ENCODE measurements at regions of chr6 and their contacts with region 1.

Region 1: GRCh38 chr6:56091159-56091869 is 156.1 kb downstream of the COL21A1 start:
- DNase-seq: no peak
- H3K4me3 ChIP-seq: peak overlapping the region in 1 of 2 donors; percentile 9
- H3K27ac ChIP-seq: peak overlapping the region; percentile 79 to 86
- H3K4me1 ChIP-seq: peaks cover 0 to 13% of the 10 kb centered on the region in 2 donors
- H3K27me3 ChIP-seq: no peaks in the 10 kb centered on the region
- CTCF ChIP-seq: no peak

Region 2: GRCh38 chr6:54419885-54420284 is 1671.4 kb before region 1 on chr6:
- intact Hi-C with region 1: loop called (anchors 10 kb)
- DNase-seq: no peak
- H3K4me3 ChIP-seq: no peak overlapping the region
- H3K27ac ChIP-seq: no peak overlapping the region
- H3K4me1 ChIP-seq: no peaks in the 10 kb centered on the region
- H3K27me3 ChIP-seq: no peaks in the 10 kb centered on the region
- CTCF ChIP-seq: no peak

Region 3: GRCh38 chr6:55882720-55883595 is 208.4 kb before region 1 on chr6:
- intact Hi-C with region 1: no loop called
- DNase-seq: no peak
- H3K4me3 ChIP-seq: no peak overlapping the region
- H3K27ac ChIP-seq: no peak overlapping the region
- H3K4me1 ChIP-seq: no peaks in the 10 kb centered on the region
- H3K27me3 ChIP-seq: no peaks in the 10 kb centered on the region
- CTCF ChIP-seq: no peak

Region 4: GRCh38 chr6:55913213-55914195 is 177.8 kb before region 1 on chr6:
- intact Hi-C with region 1: no loop called
- DNase-seq: no peak
- H3K4me3 ChIP-seq: no peak overlapping the region
- H3K27ac ChIP-seq: no peak overlapping the region
- H3K4me1 ChIP-seq: no peaks in the 10 kb centered on the region
- H3K27me3 ChIP-seq: no peaks in the 10 kb centered on the region
- CTCF ChIP-seq: no peak

Region 5: DNA sequence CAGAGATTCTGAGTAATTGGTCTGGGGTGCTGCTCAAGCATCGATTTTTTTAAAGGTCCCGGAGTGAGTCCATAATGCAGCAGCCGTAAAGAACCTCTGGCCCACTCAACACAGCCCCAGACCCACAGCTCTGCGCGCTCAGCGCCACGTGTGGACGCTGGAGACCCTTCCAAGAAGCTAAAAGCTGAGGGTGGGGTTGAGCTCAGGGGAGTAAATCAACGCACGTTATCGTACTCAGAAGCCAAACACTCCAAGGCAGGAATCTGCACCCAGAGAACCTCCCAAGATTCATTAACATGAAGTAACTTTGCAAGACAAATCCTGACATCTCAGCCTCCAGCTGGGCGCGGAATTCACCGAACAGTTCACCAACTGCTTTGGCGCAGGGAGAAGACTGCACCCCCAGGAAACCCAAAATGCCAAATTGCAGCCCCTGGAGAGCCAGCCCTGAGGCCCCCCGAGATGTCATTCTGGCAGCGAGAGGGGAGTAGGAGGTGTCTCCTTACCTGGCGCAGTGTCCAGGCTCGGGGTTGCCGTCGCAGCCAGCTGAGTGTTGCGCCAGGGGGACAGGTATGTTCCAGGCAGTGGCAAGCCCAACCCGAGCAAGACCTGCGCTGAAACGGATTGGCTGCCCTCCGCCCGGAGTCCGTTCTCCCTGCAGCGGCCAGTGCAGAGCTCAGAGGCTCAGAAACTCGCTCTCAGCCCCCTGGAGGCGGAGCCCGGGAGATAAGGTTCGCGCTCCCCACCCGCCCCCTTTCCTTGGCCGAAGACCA is 155.8 kb after region 1 on chr6 and contains the start of gene COL21A1:
- intact Hi-C with region 1: loop called (anchors 5 kb)
- DNase-seq: peak; percentile 10 to 90
- H3K4me3 ChIP-seq: peak within 1 kb of the TSS; percentile 56 to 81
- H3K27ac ChIP-seq: peak within 1 kb of the TSS; percentile 84 to 88
- H3K4me1 ChIP-seq: peaks cover 0 to 17% of the 10 kb centered on the region in 2 donors
- H3K27me3 ChIP-seq: no peaks in the 10 kb centered on the region
- CTCF ChIP-seq: peak in 2 of 3 experiments; percentile 36 to 51
- total RNA-seq, gene COL21A1: 24.5 TPM

Measured in ascending aorta (tissue), 2 donors.